Activated naive CD4-positive, alpha-beta T cell treated with anti-CD3 and anti-CD28 coated beads, Interleukin-2, amount 10 ng/mL, durations not matched to agents 7 days and 5 days (primary cell): ENCODE measurements at regions of chr1 and their contacts with region 1.

Region 1: GRCh38 chr1:89762779-89763648 is 57.8 kb upstream of the LRRC8D start:
- DNase-seq: peak; percentile 91
- H3K4me3 Mint-ChIP-seq: peak overlapping the region; percentile 71
- H3K27ac Mint-ChIP-seq: peak overlapping the region; percentile 80
- H3K4me1 Mint-ChIP-seq: peaks cover 54% of the 10 kb centered on the region
- H3K27me3 Mint-ChIP-seq: peaks cover 11% of the 10 kb centered on the region

Region 2: DNA sequence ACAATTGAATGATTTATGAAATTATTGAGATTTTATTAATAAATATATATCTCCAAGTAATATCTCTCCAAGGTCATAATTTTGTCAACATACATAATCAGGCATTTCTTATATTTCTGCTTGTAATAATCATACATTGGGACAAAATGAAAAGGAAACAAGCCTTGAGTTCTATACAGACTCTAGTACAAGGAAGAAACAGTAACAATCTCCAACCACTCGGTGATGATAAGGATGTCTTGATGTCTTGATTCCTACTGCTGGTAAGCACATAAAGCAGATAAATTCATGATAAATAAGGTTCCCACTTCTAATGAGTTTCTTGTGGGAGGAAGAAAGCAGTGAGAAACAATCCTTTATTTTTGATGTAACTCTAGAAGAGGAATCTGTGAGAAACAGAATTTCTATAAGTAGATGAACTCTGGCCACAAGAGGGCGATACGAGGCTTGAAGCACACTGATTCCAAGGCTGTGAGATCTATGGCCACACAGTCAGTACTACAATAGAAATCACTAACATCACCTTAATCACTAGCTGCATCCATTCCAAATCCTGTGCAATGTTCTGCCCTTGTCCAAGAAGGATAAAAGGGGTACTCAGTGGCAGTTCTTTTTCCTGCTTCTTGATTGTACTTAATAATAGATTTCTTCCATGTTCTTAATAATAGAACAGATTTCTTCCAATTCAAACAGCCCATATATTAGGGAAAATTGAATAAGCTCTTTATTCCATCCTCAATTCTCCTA is 279.8 kb before region 1 on chr1:
- CTCF ChIA-PET with region 1: interaction called, 58 read pairs
- DNase-seq: peak; percentile 90
- H3K4me3 Mint-ChIP-seq: no peak overlapping the region
- H3K27ac Mint-ChIP-seq: no peak overlapping the region
- H3K4me1 Mint-ChIP-seq: peaks cover 13% of the 10 kb centered on the region
- H3K27me3 Mint-ChIP-seq: peaks cover 20% of the 10 kb centered on the region

Region 3: DNA sequence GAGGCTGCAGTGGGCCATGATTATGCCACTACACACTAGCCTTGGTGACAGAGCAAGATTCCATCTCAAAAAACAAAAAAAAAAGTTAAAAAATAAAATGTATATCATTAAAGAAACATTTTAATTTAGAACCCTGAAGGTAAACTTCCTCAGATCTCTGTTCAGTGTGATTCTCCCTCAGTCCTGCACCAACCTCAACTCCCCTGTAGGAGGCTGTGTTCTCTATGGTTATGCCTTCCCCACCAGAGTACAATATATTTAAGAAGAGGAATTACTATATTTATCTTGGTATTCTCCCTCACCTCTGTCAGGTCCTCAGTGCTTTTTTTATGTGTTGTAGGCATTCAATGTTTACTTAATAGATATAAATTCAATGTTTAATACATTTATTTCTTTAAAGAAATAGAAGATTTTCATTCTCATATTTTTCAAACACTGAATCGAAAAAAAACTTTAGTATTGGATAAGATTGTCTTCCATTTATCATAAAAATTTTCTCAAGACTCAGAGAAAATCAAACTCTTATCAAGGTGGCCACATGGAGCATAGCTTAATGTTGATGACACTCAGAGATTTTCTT is 243.1 kb before region 1 on chr1:
- CTCF ChIA-PET with region 1: interaction called, 18 read pairs
- DNase-seq: peak; percentile 61
- H3K4me3 Mint-ChIP-seq: no peak overlapping the region
- H3K27ac Mint-ChIP-seq: no peak overlapping the region
- H3K4me1 Mint-ChIP-seq: peaks cover 10% of the 10 kb centered on the region
- H3K27me3 Mint-ChIP-seq: peaks cover 10% of the 10 kb centered on the region

Region 4: DNA sequence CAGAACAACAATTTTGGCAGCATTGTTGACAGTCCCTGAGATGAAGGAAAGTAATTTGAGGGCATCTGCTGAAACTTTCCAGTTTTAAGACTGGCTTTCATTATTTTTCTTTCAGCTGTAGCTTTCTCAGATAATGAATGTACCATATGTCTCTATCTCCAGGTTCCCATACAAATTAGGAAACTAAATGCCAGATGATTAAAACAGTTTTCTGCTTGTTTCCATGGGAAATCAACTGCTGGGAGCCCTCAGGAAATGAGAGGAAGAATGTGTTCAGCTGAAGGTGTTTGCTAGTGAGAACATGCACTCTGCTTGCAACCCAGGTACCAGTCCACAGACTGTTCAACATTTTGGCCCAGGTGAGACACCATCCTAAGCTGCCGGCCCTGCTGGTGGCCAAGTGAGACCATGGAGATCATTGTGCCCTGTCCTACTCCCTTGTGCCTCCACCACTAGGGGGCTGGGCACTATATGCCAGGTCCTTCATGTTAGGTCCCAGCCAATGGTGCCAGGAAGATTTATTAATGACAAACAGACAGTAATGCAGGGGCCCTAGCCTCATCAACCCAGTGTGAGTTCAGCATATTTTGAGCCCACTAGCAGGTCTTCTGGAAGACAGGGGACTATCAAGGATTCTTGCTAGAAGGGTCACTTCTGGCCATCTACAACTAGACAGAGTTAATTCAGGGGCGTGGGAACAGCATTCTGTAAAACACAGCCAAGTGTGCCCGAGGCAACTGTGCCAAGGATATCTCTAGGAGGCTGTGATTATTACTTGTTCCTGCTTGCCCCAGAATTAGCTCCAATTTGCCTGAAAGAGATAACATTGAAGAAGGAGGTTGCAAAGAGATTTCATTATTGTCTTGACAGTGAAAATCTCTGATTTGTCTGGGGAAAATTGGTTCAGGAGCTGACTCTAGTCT is 147.1 kb before region 1 on chr1:
- CTCF ChIA-PET with region 1: interaction called, 34 read pairs
- DNase-seq: peak; percentile 30
- H3K4me3 Mint-ChIP-seq: no peak overlapping the region
- H3K27ac Mint-ChIP-seq: no peak overlapping the region
- H3K4me1 Mint-ChIP-seq: peaks cover 58% of the 10 kb centered on the region
- H3K27me3 Mint-ChIP-seq: no peaks in the 10 kb centered on the region

Region 5: GRCh38 chr1:89657886-89658285 is 105.1 kb before region 1 on chr1:
- CTCF ChIA-PET with region 1: interaction called, 22 read pairs
- DNase-seq: peak; percentile 40
- H3K4me3 Mint-ChIP-seq: peak overlapping the region; percentile 6
- H3K27ac Mint-ChIP-seq: peak overlapping the region; percentile 93
- H3K4me1 Mint-ChIP-seq: peaks cover 90% of the 10 kb centered on the region
- H3K27me3 Mint-ChIP-seq: no peaks in the 10 kb centered on the region

Region 6: GRCh38 chr1:89780721-89781120 is 17.7 kb after region 1 on chr1:
- CTCF ChIA-PET with region 1: interaction called, 14 read pairs
- DNase-seq: no peak
- H3K4me3 Mint-ChIP-seq: no peak overlapping the region
- H3K27ac Mint-ChIP-seq: no peak overlapping the region
- H3K4me1 Mint-ChIP-seq: peaks cover 26% of the 10 kb centered on the region
- H3K27me3 Mint-ChIP-seq: peaks cover 8% of the 10 kb centered on the region